B cell (primary cell): ENCODE measurements at regions of chrX and their contacts with region 1.

Region 1: GRCh38 chrX:77910108-77910840 is at the start of gene ATP7A:
- DNase-seq: peak; percentile 92
- ATAC-seq: peak; percentile 98
- H3K4me3 ChIP-seq: peak within 1 kb of the TSS; percentile 69 to 87 (median 81)
- H3K4me3 Mint-ChIP-seq: peak within 1 kb of the TSS; percentile 100
- H3K27ac ChIP-seq: peak within 1 kb of the TSS; percentile 83 to 88
- H3K27ac Mint-ChIP-seq: peak within 1 kb of the TSS; percentile 99
- H3K4me1 ChIP-seq: peaks cover 6 to 18% of the 10 kb centered on the region in 2 donors
- H3K4me1 Mint-ChIP-seq: peaks cover 24% of the 10 kb centered on the region
- H3K27me3 ChIP-seq: no peaks in the 10 kb centered on the region
- H3K27me3 Mint-ChIP-seq: no peaks in the 10 kb centered on the region
- CTCF ChIP-seq: peak; percentile 56
- total RNA-seq, gene ATP7A: 12.4 and 14.8 TPM in 2 replicates

Region 2: GRCh38 chrX:77785486-77786364 is 124.5 kb before region 1 on chrX and contains the start of gene ATRX:
- CTCF ChIA-PET with region 1: no interaction called
- POLR2A ChIA-PET with region 1: no interaction called
- intact Hi-C with region 1: loop called (anchors 5 kb)
- DNase-seq: peak; percentile 86
- ATAC-seq: peak; percentile 93
- H3K4me3 ChIP-seq: peak within 1 kb of the TSS; percentile 70 to 89 (median 77)
- H3K4me3 Mint-ChIP-seq: peak within 1 kb of the TSS; percentile 100
- H3K27ac ChIP-seq: peak within 1 kb of the TSS; percentile 96 to 97
- H3K27ac Mint-ChIP-seq: peak within 1 kb of the TSS; percentile 100
- H3K4me1 ChIP-seq: peaks cover 6 to 29% of the 10 kb centered on the region in 2 donors
- H3K4me1 Mint-ChIP-seq: peaks cover 40% of the 10 kb centered on the region
- H3K27me3 ChIP-seq: no peaks in the 10 kb centered on the region
- H3K27me3 Mint-ChIP-seq: no peaks in the 10 kb centered on the region
- CTCF ChIP-seq: no peak
- total RNA-seq, gene ATRX: 173 and 187 TPM in 2 replicates

Region 3: GRCh38 chrX:78024349-78025108 is 114.3 kb after region 1 on chrX:
- CTCF ChIA-PET with region 1: interaction called, 25 read pairs
- POLR2A ChIA-PET with region 1: interaction called, 3 read pairs
- intact Hi-C with region 1: loop called (anchors 1 kb)
- DNase-seq: peak; percentile 59
- ATAC-seq: peak; percentile 61
- H3K4me3 ChIP-seq: no peak overlapping the region
- H3K4me3 Mint-ChIP-seq: no peak overlapping the region
- H3K27ac ChIP-seq: no peak overlapping the region
- H3K27ac Mint-ChIP-seq: no peak overlapping the region
- H3K4me1 ChIP-seq: no peaks in the 10 kb centered on the region
- H3K4me1 Mint-ChIP-seq: no peaks in the 10 kb centered on the region
- H3K27me3 ChIP-seq: no peaks in the 10 kb centered on the region
- H3K27me3 Mint-ChIP-seq: no peaks in the 10 kb centered on the region
- CTCF ChIP-seq: peak; percentile 71

Region 4: DNA sequence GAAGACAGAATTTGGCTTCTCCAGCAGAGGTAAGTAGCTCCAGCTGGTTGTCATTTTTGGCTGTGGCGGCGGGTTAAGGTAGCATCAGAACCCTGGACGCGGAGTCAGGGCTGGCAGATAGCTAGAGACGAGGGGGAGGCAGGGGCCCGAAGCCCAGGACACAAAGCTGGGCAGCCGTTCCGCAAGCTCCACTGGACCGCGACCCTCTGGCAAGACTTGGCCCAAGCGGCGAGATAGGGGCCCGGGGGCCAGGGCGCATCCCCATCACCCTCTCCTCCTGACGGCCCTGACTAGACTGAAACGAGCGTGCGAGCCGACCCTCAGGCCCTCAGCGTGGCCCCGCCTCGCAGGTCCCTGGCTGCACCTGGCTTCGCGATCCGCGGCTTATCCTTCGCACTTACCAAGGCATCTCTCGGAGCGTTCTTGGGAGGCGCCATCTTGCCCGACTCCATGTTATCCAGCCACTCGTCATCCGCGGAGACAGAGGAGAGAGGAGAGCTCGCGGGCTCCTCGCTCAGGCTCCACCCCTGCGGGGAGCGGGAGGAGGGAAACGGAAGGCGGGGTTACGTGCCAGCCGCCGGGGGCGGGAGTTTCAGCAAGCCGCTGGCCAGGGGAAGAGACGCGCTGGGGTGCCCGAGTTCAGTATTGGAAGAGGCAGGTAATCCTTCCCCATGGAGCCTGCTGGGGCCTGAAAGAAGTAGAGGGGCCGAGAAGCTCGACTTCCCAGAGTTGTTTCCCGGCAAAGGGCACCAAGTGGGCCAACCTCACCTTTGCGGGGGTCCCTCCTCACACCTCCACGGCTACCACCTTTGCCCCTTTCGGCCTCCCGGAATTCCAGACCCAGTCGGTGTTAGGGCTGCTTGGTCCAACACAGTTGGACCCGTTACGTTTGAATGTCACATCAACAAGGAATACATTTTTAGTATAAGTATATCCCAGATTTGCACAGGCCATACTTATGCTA is 229.2 kb after region 1 on chrX and contains the start of gene TAF9B:
- CTCF ChIA-PET with region 1: no interaction called
- POLR2A ChIA-PET with region 1: no interaction called
- intact Hi-C with region 1: loop called (anchors 10 kb)
- DNase-seq: peak; percentile 77
- ATAC-seq: peak; percentile 95
- H3K4me3 ChIP-seq: peak within 1 kb of the TSS; percentile 34 to 83 (median 77)
- H3K4me3 Mint-ChIP-seq: peak within 1 kb of the TSS; percentile 95
- H3K27ac ChIP-seq: peak within 1 kb of the TSS; percentile 44 to 71
- H3K27ac Mint-ChIP-seq: peak within 1 kb of the TSS; percentile 90
- H3K4me1 ChIP-seq: peaks cover 0 to 3% of the 10 kb centered on the region in 2 donors
- H3K4me1 Mint-ChIP-seq: peaks cover 6% of the 10 kb centered on the region
- H3K27me3 ChIP-seq: no peaks in the 10 kb centered on the region
- H3K27me3 Mint-ChIP-seq: no peaks in the 10 kb centered on the region
- CTCF ChIP-seq: no peak
- total RNA-seq, gene TAF9B: 12.2 and 13.7 TPM in 2 replicates